Aorta (tissue), 5 donors: ENCODE measurements at regions of chr4 and their contacts with region 1.

Region 1: GRCh38 chr4:68375667-68376559 is 26.0 kb upstream of the YTHDC1 start:
- DNase-seq: no peak
- ATAC-seq: peak; percentile 64
- H3K4me3 ChIP-seq: no peak overlapping the region
- H3K27ac ChIP-seq: no peak overlapping the region
- H3K4me1 ChIP-seq: no peaks in the 10 kb centered on the region
- H3K27me3 ChIP-seq: no peaks in the 10 kb centered on the region

Region 2: DNA sequence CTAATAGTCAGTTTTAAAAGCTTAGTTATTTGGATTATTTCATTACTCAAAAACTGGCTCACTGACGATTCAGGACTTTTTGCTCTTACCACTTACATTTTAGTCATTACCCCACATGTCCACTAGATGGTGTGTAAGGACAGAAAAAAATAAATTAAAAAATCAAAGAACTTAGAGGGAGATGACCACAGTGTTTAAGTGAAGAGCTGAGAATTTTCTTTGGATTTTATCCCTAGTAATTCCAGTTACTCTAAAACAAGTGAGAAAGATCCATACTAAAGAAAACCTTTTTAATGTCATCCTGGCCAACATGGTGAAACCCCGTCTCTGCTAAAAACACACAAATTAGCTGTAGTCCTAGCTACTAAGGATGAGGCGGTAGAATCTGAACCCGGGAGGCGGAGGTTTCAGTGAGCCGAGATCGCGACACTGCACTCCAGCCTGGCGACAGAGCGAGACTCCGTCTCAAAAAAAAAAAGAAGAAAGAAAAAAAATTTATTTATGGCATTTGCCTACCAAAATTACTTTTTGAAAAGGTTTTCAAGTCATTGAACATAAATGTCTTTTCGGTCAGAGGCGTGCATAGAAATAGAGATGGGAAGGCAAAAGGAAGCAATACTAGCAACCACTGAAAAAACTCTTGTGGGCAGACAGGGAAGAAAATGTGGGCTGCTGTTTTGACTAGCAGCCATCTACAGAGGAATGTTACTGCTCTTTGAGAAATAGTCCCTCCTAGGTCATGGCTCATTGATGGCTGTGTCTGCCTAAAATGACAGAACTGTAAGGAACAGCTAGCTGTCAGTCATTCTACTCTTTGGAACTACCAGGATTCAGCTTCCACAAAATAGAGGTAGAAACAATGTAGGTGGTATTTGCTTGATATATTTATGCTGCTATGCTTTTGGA is 103.8 kb before region 1 on chr4:
- intact Hi-C with region 1: loop called (anchors 1 to 2 kb)
- DNase-seq: no peak
- ATAC-seq: peak; percentile 78
- H3K4me3 ChIP-seq: no peak overlapping the region
- H3K27ac ChIP-seq: no peak overlapping the region
- H3K4me1 ChIP-seq: no peaks in the 10 kb centered on the region
- H3K27me3 ChIP-seq: peaks cover 0 to 1% of the 10 kb centered on the region in 2 donors

Region 3: DNA sequence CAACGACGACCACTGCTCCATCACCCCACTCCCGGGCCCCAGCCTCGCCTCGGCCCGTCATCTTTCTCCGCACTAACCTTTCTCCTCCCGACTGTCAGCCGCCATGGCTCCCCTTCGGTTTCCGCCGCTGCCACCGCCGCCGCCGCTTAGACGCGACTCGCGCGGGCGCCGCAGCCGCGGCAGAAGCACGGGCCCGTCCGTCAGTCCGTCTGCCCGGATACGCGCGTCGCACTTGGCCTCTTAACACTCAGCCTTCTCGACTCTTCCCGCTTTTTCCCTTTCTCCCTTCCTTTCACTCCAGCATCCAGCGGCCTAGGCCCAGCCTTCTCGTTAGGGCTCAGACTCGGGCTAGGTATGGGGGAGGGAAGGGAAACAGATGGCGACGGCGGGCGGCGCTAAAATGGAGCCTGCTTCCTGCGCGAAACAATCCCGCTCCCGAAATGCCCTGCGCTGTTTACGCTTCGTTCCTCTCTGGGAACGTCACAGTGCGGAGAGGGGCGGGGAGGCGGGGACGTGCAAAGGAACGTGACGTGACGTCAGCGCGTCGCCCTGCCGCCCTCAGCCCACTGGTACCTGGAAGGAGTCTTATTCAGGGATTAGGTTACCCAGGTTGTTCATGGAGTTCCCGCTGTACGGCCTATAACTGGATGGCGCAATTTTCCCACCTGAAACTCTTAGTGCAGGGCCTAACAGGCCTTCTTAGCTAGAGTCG is 26.1 kb before region 1 on chr4 and contains the start of gene YTHDC1:
- intact Hi-C with region 1: loop called in 1 of 2 experiments (anchors 2 kb)
- DNase-seq: peak; percentile 98 to 99
- ATAC-seq: peak; percentile 99
- H3K4me3 ChIP-seq: peak within 1 kb of the TSS; percentile 68 to 90
- H3K27ac ChIP-seq: peak within 1 kb of the TSS; percentile 84 to 99
- H3K4me1 ChIP-seq: peaks cover 1 to 8% of the 10 kb centered on the region in 2 donors
- H3K27me3 ChIP-seq: no peaks in the 10 kb centered on the region
- total RNA-seq, gene YTHDC1: 91.4 to 103 TPM